ENCODE measurements at regions of chr1 and their contacts with region 1.

Region 1: DNA sequence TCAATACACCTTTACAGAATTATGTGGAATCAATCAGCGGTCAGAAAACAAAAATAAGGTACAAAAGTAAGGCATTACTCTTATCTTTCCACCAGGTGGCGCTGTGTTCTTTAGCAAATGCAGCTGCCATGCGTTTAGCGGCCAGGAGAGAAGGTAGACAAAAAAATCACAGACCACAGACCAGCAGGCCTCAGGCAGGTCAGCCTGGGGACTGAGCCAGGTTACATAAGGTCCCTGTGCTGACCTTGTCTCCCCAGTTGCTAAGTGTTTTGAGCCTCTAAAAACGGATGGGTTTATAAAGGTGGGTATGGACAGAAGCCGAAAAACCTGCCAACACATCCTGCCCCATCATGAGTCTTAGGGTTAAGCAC is 2.8 kb downstream of the RGS16 start:
- DNase-seq: peak in 1 of 3 donors; percentile 67
- ATAC-seq: peak; percentile 50
- H3K4me3 ChIP-seq: no peak overlapping the region
- H3K4me1 ChIP-seq: peaks cover 10% of the 10 kb centered on the region
- CTCF ChIP-seq: peak; percentile 62

Region 2: DNA sequence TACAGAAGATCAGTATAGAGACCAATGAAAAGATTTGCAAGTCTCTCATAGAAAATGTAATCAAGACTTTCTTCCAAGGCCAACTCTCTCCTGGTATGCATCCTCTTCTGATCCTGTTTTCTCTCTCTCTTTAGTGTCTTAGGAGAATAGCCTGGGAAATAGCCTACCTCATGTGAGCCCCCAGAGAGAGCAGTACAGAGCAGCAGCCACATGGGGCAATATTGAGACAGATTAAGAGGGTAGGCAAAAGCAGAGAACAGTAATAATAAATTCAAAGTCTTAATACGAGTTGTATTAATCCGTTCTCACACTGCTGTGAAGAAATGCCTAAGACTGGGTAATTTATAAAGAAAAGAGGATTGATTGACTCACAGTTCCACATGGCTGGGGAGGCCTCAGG is 73.7 kb before region 1 on chr1:
- intact Hi-C with region 1: no loop called
- DNase-seq: no peak
- ATAC-seq: no peak
- H3K4me3 ChIP-seq: no peak overlapping the region
- H3K4me1 ChIP-seq: no peaks in the 10 kb centered on the region
- CTCF ChIP-seq: no peak

Region 3: DNA sequence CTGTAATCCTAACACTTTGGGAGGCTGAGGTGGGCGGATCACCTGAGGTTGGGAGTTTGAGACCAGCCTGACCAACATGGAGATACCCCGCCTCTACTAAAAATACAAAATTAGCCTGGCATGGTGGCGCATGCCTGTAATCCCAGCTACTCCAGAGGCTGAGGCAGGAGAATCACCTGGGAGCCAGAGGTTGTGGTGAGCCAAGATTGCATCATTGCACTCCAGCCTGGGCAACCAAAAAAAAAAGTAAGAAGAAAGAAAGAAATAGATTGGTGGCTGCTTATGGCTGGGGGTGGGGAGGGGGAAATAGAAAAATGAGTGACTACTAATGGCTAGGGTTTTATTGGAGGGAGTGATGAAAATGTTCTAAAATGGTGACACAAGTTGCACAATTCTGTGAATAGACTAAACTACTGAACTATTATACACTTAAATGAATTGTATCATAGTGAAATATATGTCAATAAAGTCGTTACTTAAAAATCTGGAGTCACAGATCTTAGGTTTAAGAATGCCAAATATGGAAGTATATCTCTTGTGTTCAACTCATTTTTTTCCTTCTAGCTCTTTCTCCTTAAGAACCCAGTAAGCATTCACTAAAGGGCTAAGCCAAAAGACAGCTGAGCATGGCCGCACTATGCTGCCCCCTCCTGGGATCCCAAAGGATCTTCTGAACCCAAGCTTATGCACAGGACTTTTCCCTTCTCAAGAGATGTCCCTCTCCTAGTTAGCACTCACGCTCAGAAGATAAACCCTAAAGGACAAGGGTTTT is 185.0 kb after region 1 on chr1:
- intact Hi-C with region 1: loop called (anchors 2 kb)
- DNase-seq: peak; percentile 47 to 72 (median 57)
- ATAC-seq: peak; percentile 54
- H3K4me3 ChIP-seq: no peak overlapping the region
- H3K4me1 ChIP-seq: no peaks in the 10 kb centered on the region
- CTCF ChIP-seq: peak; percentile 70